GM10248 (cell line): ENCODE measurements at regions of chr7 and their contacts with region 1.

Region 1: GRCh38 chr7:129218514-129219062 is 6.2 kb upstream of the AHCYL2 start:
- DNase-seq: peak; percentile 79
- CTCF ChIP-seq: peak; percentile 90

Region 2: GRCh38 chr7:129136887-129137642 is 81.5 kb before region 1 on chr7:
- CTCF ChIA-PET with region 1: no interaction called
- POLR2A ChIA-PET with region 1: no interaction called
- DNase-seq: peak; percentile 49
- CTCF ChIP-seq: no peak

Region 3: DNA sequence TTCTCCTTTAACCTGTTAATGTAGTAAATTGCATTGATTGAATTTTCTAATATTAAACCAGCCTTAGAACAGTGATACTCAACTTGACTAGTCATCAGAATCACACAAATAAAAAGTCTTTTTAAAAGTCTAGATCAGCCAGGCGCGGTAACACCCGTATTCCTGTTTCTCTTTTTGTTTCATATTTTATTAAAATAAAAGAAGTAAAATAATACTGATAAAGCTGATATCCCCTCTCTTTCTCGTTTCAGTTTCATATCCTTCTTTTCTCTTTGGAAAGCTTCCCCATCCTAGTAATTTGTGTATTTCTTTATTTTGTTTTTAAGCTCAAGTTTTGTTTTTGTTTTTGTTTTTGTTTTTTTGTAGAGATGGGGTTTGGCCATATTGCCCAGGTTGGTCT is 20.8 kb before region 1 on chr7:
- CTCF ChIA-PET with region 1: interaction called, 58 read pairs
- POLR2A ChIA-PET with region 1: no interaction called
- DNase-seq: no peak
- CTCF ChIP-seq: no peak

Region 4: DNA sequence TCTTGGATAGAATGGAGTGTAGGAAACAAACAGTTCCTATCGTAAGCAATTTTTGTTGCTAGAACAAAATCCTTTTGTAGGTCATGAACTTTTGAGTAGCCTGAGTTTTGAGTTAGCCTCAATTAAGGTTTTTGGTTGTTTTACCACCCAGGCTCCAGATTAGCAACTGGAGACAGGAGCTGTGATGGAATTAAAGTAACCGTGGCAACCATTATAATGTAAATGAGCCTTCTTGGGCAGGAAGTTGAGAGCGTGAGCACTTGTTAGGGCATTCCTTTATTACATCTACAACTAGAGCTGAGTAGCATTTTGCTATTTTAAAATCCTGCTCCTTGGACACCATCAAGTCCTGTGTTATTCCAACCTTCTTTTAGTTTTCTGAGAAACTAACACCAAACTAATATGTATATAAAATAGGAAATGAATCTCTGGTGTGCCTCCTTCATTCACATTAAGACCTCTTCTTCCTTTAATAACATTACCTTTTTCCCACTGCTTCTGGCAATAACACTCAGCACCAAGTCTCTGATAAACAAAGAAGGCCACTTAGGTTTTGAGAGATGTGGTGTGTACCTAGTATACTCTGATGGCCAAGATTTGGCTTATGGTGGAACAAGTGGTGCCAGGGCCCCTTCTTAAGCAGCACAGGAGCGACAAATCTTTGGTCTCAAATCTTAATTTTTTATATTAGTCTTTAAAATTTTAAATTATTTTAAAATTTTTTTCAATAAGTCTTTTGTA is 40.2 kb after region 1 on chr7:
- CTCF ChIA-PET with region 1: interaction called, 37 read pairs
- POLR2A ChIA-PET with region 1: no interaction called
- DNase-seq: no peak
- CTCF ChIP-seq: no peak

Region 5: DNA sequence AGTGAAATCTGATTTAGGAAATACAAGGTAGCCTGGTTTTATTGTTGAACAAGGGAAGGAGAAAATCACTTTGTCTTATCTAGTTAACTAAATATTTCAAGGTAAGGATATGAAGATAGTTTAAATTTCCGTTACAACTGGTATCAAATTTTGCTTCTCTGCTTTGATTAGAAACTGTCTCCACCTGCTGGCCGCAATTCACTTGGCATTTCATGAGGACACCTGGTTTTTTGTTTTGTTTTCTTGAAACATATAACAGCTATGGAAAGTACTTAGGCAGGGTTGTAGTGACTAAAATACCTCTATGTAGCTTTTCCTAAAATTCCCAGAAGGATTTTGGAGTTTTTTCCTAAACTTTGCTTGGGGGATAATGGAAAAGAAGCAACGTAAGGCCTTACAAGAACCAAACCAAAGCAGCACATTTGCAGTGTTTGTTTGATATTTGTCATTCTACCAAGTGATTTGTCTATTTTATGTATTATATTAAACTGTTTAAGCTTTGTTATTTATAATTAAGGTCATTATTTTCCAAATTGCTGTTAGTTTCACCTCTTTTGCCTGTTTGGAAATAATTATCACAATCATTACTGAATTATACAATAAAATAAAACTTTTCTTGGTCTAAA is 79.8 kb after region 1 on chr7:
- CTCF ChIA-PET with region 1: interaction called, 144 read pairs
- POLR2A ChIA-PET with region 1: no interaction called
- DNase-seq: peak; percentile 62
- CTCF ChIP-seq: peak; percentile 74

Region 6: GRCh38 chr7:129367700-129368388 is 149.3 kb after region 1 on chr7:
- CTCF ChIA-PET with region 1: interaction called, 48 read pairs
- POLR2A ChIA-PET with region 1: no interaction called
- DNase-seq: peak; percentile 75
- CTCF ChIP-seq: peak; percentile 93

Region 7: DNA sequence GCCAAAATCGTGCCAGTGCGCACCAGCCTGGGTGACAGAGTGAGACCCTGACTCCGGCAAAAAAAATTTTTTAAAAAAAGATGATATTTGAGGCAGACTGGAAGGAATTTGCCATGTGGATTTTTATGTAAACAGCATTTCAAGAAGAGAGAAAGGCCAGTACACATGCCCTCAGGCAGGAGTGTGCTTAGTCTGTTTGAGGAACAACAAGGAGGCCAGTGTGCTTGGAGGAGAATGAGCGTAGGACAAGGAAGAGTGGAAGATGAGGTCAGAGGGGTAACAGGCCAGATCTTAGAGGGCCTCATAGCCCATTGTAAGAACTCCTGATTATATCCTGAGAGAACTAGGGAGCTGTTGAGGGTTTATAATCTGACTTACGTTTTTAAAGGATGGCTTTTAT is 198.5 kb after region 1 on chr7:
- CTCF ChIA-PET with region 1: no interaction called
- POLR2A ChIA-PET with region 1: no interaction called
- DNase-seq: no peak
- CTCF ChIP-seq: no peak

Region 8: DNA sequence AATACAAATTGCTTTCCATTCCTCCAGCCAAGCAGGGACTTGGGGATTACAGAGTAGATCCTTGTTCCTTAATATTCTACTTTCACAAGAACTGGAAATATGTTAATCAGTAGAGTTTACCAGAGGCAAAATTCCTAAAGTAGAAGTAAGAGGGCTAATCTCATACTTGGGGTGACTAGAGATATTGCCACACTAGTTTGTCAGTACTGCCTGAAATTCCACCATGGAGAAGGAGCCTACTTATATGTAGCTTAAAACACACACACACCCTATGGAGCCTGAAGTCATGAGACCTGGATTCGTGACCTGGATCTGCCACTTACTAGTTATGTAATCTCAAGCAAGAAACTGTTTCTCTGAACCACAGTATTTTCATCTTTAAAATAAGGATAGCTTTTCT is 249.5 kb after region 1 on chr7:
- CTCF ChIA-PET with region 1: interaction called, 73 read pairs
- POLR2A ChIA-PET with region 1: no interaction called
- DNase-seq: no peak
- CTCF ChIP-seq: no peak